Endothelial cell of umbilical vein (primary cell): ENCODE measurements at regions of chr9 and their contacts with region 1.

Region 1: GRCh38 chr9:130712564-130713285 is 19.1 kb downstream of the EXOSC2 start:
- DNase-seq: peak; percentile 98
- H3K4me3 ChIP-seq: peak overlapping the region; percentile 78 to 97 (median 81)
- H3K27ac ChIP-seq: peak overlapping the region; percentile 81
- H3K4me1 ChIP-seq: peaks cover 12% of the 10 kb centered on the region
- H3K27me3 ChIP-seq: no peaks in the 10 kb centered on the region
- CTCF ChIP-seq: no peak
- POLR2A ChIP-seq: peak; percentile 85

Region 2: DNA sequence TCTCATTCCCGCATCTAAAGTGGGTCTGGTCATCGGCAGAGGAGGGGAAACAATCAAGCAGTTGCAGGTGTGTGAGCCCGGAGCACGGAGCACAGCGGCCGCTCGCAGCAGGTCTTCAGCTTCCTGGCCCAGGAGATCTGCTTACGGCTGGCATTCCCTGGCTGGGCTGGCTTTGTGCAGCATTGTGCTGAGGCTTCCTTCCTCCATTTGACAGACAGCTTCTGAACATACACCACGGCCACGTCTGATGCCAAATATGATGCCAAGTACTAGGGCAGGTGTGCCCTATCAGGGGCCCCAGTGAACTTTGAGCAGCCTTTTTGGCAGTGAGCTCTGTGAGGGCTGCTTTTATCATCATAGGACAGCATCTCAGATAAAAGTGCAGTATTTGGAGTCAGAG is 96.3 kb before region 1 on chr9:
- CTCF ChIA-PET with region 1: no interaction called
- POLR2A ChIA-PET with region 1: no interaction called
- dilution Hi-C with region 1: no loop called
- intact Hi-C with region 1: no loop called
- DNase-seq: no peak
- H3K4me3 ChIP-seq: no peak overlapping the region
- H3K27ac ChIP-seq: no peak overlapping the region
- H3K4me1 ChIP-seq: no peaks in the 10 kb centered on the region
- H3K27me3 ChIP-seq: no peaks in the 10 kb centered on the region
- CTCF ChIP-seq: no peak
- POLR2A ChIP-seq: no peak

Region 3: GRCh38 chr9:130701056-130702022 is 11.4 kb before region 1 on chr9:
- CTCF ChIA-PET with region 1: interaction called, 14 read pairs
- POLR2A ChIA-PET with region 1: no interaction called
- dilution Hi-C with region 1: no loop called
- intact Hi-C with region 1: no loop called
- DNase-seq: peak; percentile 84
- H3K4me3 ChIP-seq: no peak overlapping the region
- H3K27ac ChIP-seq: no peak overlapping the region
- H3K4me1 ChIP-seq: peaks cover 2% of the 10 kb centered on the region
- H3K27me3 ChIP-seq: no peaks in the 10 kb centered on the region
- CTCF ChIP-seq: peak; percentile 97 to 99
- POLR2A ChIP-seq: no peak

Region 4: GRCh38 chr9:130746434-130747212 is 33.9 kb after region 1 on chr9:
- CTCF ChIA-PET with region 1: interaction called, 5 read pairs
- POLR2A ChIA-PET with region 1: no interaction called
- dilution Hi-C with region 1: no loop called
- intact Hi-C with region 1: loop called (anchors 2 kb)
- DNase-seq: peak; percentile 86
- H3K4me3 ChIP-seq: no peak overlapping the region
- H3K27ac ChIP-seq: no peak overlapping the region
- H3K4me1 ChIP-seq: peaks cover 23% of the 10 kb centered on the region
- H3K27me3 ChIP-seq: no peaks in the 10 kb centered on the region
- CTCF ChIP-seq: no peak
- POLR2A ChIP-seq: no peak

Region 5: DNA sequence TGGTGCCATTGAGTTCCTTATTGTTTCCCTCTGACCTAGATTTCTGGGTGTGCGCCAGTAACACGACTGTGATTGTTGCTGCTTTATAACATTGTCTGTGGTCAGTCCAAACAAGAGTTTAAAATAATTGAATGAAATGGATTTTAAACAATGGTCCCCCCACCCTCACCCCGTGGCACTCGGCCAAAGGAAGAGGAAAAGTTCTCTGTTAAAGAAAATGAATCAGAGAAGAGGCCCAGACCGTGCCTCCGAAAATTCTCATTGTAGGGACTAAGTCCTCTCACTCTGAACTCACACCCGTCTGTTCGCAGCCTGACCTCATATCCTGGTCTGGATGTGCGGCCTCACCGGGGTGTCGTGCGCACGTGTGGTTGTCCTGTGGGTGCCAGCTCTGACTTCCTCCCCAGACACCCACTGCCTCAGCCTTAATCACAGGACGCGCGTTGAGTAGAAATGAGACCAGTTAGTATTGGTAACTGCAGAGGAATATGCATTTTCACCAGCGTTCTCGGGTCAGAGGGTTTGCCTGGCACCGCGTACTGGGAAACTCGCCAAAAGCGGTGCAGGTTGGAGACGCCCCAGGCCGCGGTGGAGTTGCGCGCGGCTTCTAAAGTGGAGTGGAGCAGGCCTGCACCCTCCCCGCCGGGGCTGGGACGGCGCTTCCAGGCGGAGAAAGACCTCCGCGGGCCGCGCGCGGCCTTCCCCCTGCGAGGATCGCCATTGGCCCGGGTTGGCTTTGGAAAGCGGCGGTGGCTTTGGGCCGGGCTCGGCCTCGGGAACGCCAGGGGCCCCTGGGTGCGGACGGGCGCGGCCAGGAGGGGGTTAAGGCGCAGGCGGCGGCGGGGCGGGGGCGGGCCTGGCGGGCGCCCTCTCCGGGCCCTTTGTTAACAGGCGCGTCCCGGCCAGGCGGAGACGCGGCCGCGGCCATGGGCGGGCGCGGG is 121.9 kb after region 1 on chr9 and contains the start of gene ABL1:
- CTCF ChIA-PET with region 1: interaction called, 3 read pairs
- POLR2A ChIA-PET with region 1: interaction called, 5 read pairs
- dilution Hi-C with region 1: no loop called
- intact Hi-C with region 1: loop called (anchors 1 kb)
- DNase-seq: peak; percentile 88
- H3K4me3 ChIP-seq: peak within 1 kb of the TSS; percentile 85 to 92 (median 89)
- H3K27ac ChIP-seq: peak within 1 kb of the TSS; percentile 85
- H3K4me1 ChIP-seq: peaks cover 47% of the 10 kb centered on the region
- H3K27me3 ChIP-seq: no peaks in the 10 kb centered on the region
- CTCF ChIP-seq: no peak
- POLR2A ChIP-seq: peak; percentile 60
- total RNA-seq, gene ABL1: 79.2 and 87.1 TPM in 2 replicates

Region 6: GRCh38 chr9:130860458-130861316 is 148.0 kb after region 1 on chr9:
- CTCF ChIA-PET with region 1: interaction called, 327 read pairs
- POLR2A ChIA-PET with region 1: no interaction called
- dilution Hi-C with region 1: no loop called
- intact Hi-C with region 1: loop called (anchors 1 kb)
- DNase-seq: peak; percentile 70
- H3K4me3 ChIP-seq: no peak overlapping the region
- H3K27ac ChIP-seq: peak overlapping the region; percentile 82
- H3K4me1 ChIP-seq: peaks cover 34% of the 10 kb centered on the region
- H3K27me3 ChIP-seq: no peaks in the 10 kb centered on the region
- CTCF ChIP-seq: peak in 1 of 2 donors; percentile 34
- POLR2A ChIP-seq: no peak